H1 (cell line): ENCODE measurements at regions of chr17 and their contacts with region 1.

Region 1: GRCh38 chr17:77054936-77055335 is 85.8 kb upstream of the SEC14L1 start:
- DNase-seq: no peak
- H3K4me3 ChIP-seq: no peak overlapping the region
- H3K27ac ChIP-seq: no peak overlapping the region
- H3K4me1 ChIP-seq: peaks cover 0 to 2% (median 0%) of the 10 kb centered on the region in 4 experiments; a peak in 3 of 7 replicates
- H3K27me3 ChIP-seq: no peaks in the 10 kb centered on the region
- CTCF ChIP-seq: peak in 1 of 3 experiments; percentile 17; a peak in 1 of 4 replicates
- EP300 ChIP-seq: no peak
- POLR2A ChIP-seq: no peak
- RAD21 ChIP-seq: no peak

Region 2: DNA sequence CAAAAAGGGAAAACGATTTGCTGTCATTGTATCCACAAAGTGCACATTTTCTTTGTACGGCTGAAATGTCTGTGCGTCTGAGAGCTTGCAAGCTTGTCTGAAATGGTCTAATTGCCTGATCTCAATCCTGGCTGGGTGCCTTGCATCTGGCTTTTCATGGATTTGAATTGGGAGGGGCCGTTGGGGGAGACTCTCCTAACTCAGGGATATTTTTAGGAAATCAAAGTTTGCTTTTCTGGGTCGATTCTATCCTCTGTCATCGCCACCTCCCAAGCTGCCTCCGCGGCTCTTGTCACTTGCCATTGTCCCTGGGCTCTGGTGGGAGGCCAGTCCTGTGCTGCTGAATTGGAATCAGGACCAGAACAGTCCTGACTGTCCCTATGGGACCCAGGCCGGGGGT is 220.1 kb before region 1 on chr17:
- CTCF ChIA-PET with region 1: no interaction called
- POLR2A ChIA-PET with region 1: no interaction called
- DNase-seq: no peak
- H3K4me3 ChIP-seq: no peak overlapping the region
- H3K27ac ChIP-seq: no peak overlapping the region
- H3K4me1 ChIP-seq: peaks cover 0 to 6% (median 3%) of the 10 kb centered on the region in 4 experiments; a peak in 6 of 7 replicates
- H3K27me3 ChIP-seq: peaks cover 0 to 3% (median under 1%) of the 10 kb centered on the region in 4 experiments; a peak in 3 of 7 replicates
- CTCF ChIP-seq: no peak
- EP300 ChIP-seq: no peak
- POLR2A ChIP-seq: no peak
- RAD21 ChIP-seq: no peak

Region 3: DNA sequence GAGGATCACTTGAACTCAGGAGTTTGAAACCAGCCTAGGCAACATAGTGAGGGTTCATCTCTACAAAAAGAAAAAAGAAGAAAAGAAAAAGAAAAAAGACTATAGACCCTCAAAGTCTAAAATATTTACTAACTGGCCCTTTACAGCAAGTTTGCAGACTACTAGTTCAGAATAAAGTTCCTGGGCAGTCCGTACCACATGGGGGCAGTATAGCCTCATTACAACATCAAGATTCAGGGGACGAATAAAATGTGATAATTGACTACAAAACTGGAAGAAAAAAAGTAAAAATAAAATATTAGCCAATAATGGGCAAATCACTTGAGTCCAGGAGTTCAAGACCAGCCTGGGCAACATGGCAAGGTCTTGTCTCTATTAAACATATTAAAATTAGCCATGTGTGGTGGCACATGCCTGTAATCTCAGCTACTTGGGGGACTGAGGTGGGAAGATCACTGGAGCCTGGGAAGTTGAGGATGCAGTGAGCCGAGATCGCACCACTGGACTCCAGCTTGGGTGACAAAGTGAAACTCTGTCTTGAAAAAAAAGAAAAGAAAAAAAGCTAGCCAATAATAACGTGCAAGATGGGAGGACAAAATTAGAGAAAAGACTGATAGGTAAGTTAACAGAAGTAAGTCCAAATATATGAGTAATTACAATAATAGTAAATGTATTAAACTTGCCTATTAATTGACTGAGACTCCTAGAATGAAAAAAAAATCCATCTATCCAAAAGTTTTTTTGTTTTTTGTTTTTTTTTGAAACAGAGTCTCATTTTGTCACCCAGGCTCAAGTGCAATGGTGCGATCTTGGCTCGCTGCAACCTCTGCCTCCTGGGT is 43.5 kb before region 1 on chr17:
- CTCF ChIA-PET with region 1: interaction called, 72 read pairs
- POLR2A ChIA-PET with region 1: no interaction called
- DNase-seq: peak in 1 of 2 experiments; percentile 86
- H3K4me3 ChIP-seq: no peak overlapping the region
- H3K27ac ChIP-seq: no peak overlapping the region
- H3K4me1 ChIP-seq: no peaks in the 10 kb centered on the region
- H3K27me3 ChIP-seq: 0 out of 7 replicates have a peak, but pooled peaks cover 0 to 2% (median 0%) of the 10 kb centered on the region in 4 experiments
- CTCF ChIP-seq: peak in 2 of 3 experiments; percentile 71 to 73; a peak in 3 of 4 replicates
- EP300 ChIP-seq: no peak
- POLR2A ChIP-seq: no peak
- RAD21 ChIP-seq: peak; percentile 84 to 89

Region 4: DNA sequence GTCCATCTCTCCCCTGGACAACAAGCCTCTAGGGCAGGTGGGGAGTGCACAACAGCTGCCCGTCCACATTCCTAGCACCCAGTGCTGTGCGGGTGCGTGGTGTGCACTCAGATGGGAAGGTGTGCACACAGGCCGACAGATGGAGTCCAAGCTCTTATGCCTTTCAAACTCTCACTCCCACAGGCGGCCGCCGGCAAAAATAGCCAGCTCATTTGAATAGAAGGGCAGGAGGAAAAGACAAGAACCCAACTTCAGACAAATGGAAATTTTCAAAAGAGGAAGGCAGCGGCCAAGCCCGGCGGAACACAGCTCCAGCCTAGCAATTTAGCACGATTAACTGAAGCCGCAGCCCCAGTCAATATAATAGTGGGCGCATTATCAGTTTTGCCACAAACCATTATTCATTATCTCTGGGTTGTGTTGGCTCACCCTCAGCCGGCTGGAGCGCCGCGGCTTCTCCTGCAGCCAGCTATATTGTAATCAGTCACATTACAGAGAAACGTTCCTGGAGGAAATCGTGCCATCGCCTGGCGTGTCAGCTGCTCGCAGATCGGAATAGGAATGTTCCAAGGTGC is 18.0 kb before region 1 on chr17:
- CTCF ChIA-PET with region 1: interaction called, 25 read pairs
- POLR2A ChIA-PET with region 1: no interaction called
- DNase-seq: no peak
- H3K4me3 ChIP-seq: no peak overlapping the region
- H3K27ac ChIP-seq: no peak overlapping the region
- H3K4me1 ChIP-seq: no peaks in the 10 kb centered on the region
- H3K27me3 ChIP-seq: no peaks in the 10 kb centered on the region
- CTCF ChIP-seq: no peak
- EP300 ChIP-seq: no peak
- POLR2A ChIP-seq: no peak
- RAD21 ChIP-seq: no peak

Region 5: GRCh38 chr17:77068915-77069314 is 14.0 kb after region 1 on chr17:
- CTCF ChIA-PET with region 1: interaction called, 83 read pairs
- POLR2A ChIA-PET with region 1: interaction called, 3 read pairs
- DNase-seq: no peak
- H3K4me3 ChIP-seq: no peak overlapping the region
- H3K27ac ChIP-seq: no peak overlapping the region
- H3K4me1 ChIP-seq: peaks cover 0 to 3% (median 0%) of the 10 kb centered on the region in 4 experiments; a peak in 3 of 7 replicates
- H3K27me3 ChIP-seq: no peaks in the 10 kb centered on the region
- CTCF ChIP-seq: no peak
- EP300 ChIP-seq: no peak
- POLR2A ChIP-seq: no peak
- RAD21 ChIP-seq: no peak

Region 6: DNA sequence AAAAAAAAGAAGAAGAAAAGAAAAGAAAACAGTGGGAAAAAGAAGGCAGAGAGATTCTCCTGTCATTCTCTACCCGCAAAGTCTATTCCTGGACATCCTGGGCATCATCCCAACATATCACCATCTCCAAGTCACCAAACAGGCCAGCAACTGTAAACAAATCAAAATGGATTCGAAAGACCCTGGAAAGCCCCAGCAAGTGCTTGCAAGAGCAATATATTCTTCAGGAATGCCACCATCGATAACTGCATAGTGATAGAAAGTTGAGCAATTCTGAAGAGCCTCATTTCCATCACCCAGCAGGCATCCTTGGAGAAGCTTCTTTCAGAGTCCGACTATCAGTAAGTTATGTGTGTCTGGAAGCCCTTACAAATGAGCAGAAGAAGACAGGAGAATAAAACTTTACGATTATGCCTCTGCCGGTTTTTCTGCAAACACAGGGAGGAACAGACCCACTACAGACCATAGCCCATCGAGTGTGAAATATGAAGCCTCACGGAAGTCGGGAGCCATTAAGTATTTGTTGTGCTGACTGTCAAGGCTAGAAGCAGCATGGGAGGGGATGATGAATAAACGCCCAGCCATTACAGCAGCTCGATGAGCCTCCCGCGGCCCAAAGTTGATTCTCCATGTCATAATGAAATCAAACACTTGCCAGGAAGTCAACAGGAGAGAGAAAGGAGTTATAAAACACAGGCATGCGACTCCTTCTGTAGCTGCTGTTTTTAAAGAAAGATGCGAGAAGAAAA is 21.4 kb after region 1 on chr17:
- CTCF ChIA-PET with region 1: interaction called, 13 read pairs
- POLR2A ChIA-PET with region 1: no interaction called
- DNase-seq: no peak
- H3K4me3 ChIP-seq: no peak overlapping the region
- H3K27ac ChIP-seq: no peak overlapping the region
- H3K4me1 ChIP-seq: peaks cover 0 to 2% (median 0%) of the 10 kb centered on the region in 4 experiments; a peak in 1 of 7 replicates
- H3K27me3 ChIP-seq: no peaks in the 10 kb centered on the region
- CTCF ChIP-seq: no peak
- EP300 ChIP-seq: no peak
- POLR2A ChIP-seq: no peak
- RAD21 ChIP-seq: no peak

Region 7: DNA sequence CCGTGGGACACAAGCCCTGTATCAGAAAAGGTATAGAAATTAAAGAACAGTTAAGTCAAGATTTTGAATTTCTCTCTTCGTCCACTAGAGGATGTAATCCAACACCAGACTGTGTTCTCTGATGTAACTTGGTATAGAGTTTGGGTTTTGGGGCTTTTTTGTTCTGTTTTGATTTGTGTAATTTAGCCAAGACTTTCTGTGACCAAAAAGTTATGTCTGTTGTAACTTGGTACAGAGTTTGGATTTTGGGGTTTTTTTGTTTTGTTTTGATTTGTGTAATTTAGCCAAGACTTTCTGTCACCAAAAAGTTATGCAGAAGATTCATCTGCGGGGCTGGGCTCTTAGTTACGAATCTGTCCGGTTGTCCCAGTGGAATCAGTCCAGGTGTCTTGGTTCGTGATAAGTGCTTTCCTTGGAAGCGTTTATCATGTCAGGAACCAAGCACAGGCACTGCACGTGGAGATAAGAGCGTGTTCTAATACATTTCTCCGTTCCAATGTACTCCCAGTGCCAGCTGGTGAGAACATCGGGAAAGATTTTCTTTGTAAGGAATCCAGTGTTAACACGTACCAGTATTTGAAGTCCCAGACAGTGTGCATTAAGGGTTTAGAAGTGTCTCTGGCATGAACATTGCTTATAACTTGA is 41.8 kb after region 1 on chr17:
- CTCF ChIA-PET with region 1: no interaction called
- POLR2A ChIA-PET with region 1: no interaction called
- DNase-seq: no peak
- H3K4me3 ChIP-seq: no peak overlapping the region
- H3K27ac ChIP-seq: no peak overlapping the region
- H3K4me1 ChIP-seq: no peaks in the 10 kb centered on the region; a peak in 2 of 7 replicates
- H3K27me3 ChIP-seq: no peaks in the 10 kb centered on the region
- CTCF ChIP-seq: peak in 2 of 3 experiments; percentile 38 to 46; a peak in 2 of 4 replicates
- EP300 ChIP-seq: no peak
- POLR2A ChIP-seq: no peak
- RAD21 ChIP-seq: peak; percentile 52 to 58

Region 8: GRCh38 chr17:77107506-77108433 is 52.8 kb after region 1 on chr17:
- CTCF ChIA-PET with region 1: no interaction called
- POLR2A ChIA-PET with region 1: no interaction called
- DNase-seq: no peak
- H3K4me3 ChIP-seq: no peak overlapping the region
- H3K27ac ChIP-seq: no peak overlapping the region
- H3K4me1 ChIP-seq: peaks cover 4 to 17% (median 9%) of the 10 kb centered on the region in 4 experiments; a peak in 6 of 7 replicates
- H3K27me3 ChIP-seq: no peaks in the 10 kb centered on the region
- CTCF ChIP-seq: no peak
- EP300 ChIP-seq: no peak
- POLR2A ChIP-seq: no peak
- RAD21 ChIP-seq: no peak